ENCODE measurements at regions of chr5 and their contacts with region 1.

Region 1: GRCh38 chr5:33936004-33936380 is 194 bp upstream of the RXFP3 start:
- DNase-seq: peak; percentile 45
- H3K4me3 Mint-ChIP-seq: no peak overlapping the region
- H3K27ac Mint-ChIP-seq: no peak overlapping the region
- H3K4me1 Mint-ChIP-seq: no peaks in the 10 kb centered on the region
- H3K27me3 Mint-ChIP-seq: peaks cover 50% of the 10 kb centered on the region

Region 2: DNA sequence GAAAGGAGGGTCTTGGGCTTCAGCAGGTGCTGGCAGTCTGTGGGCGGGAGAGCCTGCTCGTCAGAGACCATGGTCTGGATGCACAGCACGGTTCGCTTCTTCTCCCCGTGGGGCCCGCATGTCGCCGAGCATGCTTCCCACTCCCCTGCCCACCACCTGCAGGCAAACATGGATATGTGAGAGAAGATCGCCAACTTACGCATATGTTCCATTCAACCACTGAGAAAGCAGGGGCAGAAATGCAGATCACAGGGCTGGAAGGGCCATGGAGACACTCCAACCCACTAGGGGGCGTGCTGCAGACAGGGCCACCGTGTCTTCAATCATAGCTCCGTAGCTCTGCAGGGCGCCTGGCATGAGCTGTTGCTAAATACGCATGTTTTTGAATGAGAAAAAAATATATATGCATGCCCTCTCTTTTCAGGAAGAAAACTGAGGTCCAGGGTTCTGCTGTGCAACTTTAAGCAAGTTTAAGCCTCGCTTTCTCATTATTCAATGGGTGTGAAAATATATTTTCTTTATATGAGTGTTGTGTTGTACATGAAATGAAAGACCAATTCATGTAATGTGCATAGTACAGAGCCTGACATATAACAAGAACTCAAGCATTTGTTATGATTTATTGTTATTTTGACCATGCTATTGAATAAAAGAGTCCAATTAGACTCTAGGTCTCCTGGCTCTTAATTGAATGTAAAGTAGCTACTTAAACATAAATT is 347.2 kb before region 1 on chr5:
- intact Hi-C with region 1: loop called (anchors 1 kb)
- DNase-seq: peak; percentile 25
- H3K4me3 Mint-ChIP-seq: no peak overlapping the region
- H3K27ac Mint-ChIP-seq: no peak overlapping the region
- H3K4me1 Mint-ChIP-seq: no peaks in the 10 kb centered on the region
- H3K27me3 Mint-ChIP-seq: no peaks in the 10 kb centered on the region

Region 3: DNA sequence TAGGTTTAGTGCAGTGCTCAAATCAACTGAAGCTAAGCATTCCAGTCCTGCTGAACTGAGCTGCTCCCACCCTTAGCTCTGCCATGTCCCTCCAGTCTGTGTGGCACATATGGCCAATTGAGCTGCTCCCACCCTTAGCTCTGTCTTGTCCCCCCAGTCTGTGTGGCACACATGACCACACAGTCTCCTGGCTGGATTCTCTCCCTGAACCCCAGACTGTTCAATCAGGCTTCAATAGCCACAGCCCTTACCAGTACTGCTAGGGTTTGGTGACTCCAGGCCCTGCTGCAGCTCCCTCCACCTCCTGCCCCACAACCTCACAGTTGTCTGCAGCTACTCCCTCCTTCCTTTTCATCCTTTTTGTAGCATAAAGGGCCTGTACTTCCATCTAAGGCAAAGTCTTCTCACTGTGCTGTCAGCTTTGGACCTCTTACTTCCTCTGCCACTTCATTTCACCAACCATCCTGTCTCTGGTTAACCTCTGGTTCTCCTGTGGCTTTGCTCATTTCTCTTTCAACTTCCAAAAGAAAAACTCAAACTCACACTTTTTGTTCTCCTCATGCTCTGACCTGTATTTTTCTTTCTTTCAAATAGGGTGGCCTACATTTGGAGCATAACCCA is 95.0 kb before region 1 on chr5:
- intact Hi-C with region 1: no loop called
- DNase-seq: peak; percentile 13
- H3K4me3 Mint-ChIP-seq: no peak overlapping the region
- H3K27ac Mint-ChIP-seq: no peak overlapping the region
- H3K4me1 Mint-ChIP-seq: peaks cover 18% of the 10 kb centered on the region
- H3K27me3 Mint-ChIP-seq: peaks cover 12% of the 10 kb centered on the region

Region 4: DNA sequence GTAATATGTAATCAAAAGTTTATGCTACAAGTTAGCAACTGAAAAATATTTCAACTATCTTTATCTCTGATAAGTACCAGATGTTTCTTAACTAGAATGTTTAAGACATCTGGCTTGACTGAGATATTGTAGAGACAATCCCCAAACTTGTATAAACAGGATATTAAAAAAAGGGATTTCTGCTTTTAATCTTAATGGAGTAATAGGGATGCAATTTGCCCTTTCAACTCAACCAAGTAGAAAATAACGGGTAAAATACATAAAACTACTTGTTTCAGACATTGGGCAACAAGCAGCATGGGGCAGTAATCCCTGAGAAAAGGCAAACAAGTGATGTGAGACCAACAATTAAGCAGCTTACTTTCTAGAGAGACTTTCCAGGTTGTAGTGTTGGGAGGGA is 34.8 kb before region 1 on chr5:
- intact Hi-C with region 1: no loop called
- DNase-seq: no peak
- H3K4me3 Mint-ChIP-seq: no peak overlapping the region
- H3K27ac Mint-ChIP-seq: no peak overlapping the region
- H3K4me1 Mint-ChIP-seq: no peaks in the 10 kb centered on the region
- H3K27me3 Mint-ChIP-seq: peaks cover 10% of the 10 kb centered on the region

Region 5: GRCh38 chr5:33969572-33970452 is 33.8 kb after region 1 on chr5:
- intact Hi-C with region 1: loop called (anchors 2 kb)
- DNase-seq: no peak
- H3K4me3 Mint-ChIP-seq: no peak overlapping the region
- H3K27ac Mint-ChIP-seq: no peak overlapping the region
- H3K4me1 Mint-ChIP-seq: peaks cover 42% of the 10 kb centered on the region
- H3K27me3 Mint-ChIP-seq: no peaks in the 10 kb centered on the region